Activated CD4-positive, alpha-beta T cell treated with anti-CD3 and anti-CD28 coated beads for 36 hours (primary cell): ENCODE measurements at regions of chr1 and their contacts with region 1.

Region 1: DNA sequence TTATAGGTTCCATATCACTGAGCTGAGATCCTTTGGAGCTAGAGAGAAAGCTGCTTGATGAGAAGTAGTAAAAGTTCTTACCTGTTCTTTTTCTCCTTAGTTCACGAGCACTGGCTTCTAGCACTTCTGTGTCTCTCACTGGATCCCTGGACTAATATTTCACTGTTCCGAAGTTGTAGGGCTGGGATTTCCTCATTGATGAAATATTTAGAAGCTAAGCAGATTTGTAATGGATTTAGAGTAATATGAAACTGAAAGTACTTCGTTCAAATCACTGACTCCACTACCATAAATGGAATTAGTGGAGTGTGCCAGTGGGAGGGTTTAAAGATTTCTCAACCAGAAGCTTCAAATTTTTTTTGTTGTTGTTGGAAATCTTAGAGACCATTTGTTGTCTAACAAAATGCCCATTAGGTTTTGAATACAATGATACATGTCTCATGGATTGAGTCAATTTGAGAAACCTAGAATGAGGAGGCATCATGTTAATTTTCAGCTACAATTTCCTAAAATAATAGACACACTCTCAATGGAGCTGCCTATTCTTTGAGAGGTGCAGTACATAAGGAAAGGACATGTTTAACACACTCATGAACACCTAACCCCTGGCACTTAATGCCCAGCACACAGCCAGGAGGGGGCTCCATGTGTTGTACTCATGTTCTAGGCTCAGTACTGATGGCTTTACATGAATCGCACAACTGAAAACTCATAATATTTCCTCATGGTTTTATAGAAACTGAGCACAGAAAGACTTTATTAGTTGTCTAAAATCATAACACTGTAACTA is at the start of gene GBP1:
- DNase-seq: peak; percentile 24
- ATAC-seq: peak; percentile 77
- H3K4me3 Mint-ChIP-seq: peak within 1 kb of the TSS; percentile 78
- H3K27ac Mint-ChIP-seq: peak within 1 kb of the TSS; percentile 93
- H3K4me1 Mint-ChIP-seq: peaks cover 58% of the 10 kb centered on the region
- H3K27me3 Mint-ChIP-seq: no peaks in the 10 kb centered on the region
- total RNA-seq, gene GBP1: 67.6 to 79.9 TPM

Region 2: DNA sequence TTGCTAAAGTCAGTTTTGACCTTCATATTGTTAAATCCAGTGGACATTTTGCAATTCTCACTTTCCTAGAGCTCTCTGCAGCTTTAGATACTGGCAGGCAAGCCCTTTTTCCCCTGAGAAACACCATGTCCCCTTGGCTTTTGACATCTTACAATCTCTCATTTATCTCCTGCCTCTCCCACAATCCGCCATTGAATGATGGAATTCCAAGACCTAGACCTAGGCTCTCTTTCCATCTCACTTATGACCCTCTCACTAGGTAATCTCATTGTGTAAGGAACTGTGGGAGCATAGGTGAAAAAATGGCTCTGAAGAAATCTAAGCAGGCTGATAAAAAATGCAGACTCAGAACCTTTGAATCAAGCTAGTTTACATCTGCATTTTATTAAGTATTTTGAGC is 74.8 kb before region 1 on chr1:
- CTCF ChIA-PET with region 1: interaction called, 4 read pairs
- POLR2A ChIA-PET with region 1: interaction called, 3 read pairs
- intact Hi-C with region 1: loop called in 1 of 2 experiments (anchors 1 kb)
- DNase-seq: no peak
- ATAC-seq: no peak
- H3K4me3 Mint-ChIP-seq: peak overlapping the region; percentile 41
- H3K27ac Mint-ChIP-seq: peak overlapping the region; percentile 48
- H3K4me1 Mint-ChIP-seq: peaks cover 50% of the 10 kb centered on the region
- H3K27me3 Mint-ChIP-seq: no peaks in the 10 kb centered on the region

Region 3: DNA sequence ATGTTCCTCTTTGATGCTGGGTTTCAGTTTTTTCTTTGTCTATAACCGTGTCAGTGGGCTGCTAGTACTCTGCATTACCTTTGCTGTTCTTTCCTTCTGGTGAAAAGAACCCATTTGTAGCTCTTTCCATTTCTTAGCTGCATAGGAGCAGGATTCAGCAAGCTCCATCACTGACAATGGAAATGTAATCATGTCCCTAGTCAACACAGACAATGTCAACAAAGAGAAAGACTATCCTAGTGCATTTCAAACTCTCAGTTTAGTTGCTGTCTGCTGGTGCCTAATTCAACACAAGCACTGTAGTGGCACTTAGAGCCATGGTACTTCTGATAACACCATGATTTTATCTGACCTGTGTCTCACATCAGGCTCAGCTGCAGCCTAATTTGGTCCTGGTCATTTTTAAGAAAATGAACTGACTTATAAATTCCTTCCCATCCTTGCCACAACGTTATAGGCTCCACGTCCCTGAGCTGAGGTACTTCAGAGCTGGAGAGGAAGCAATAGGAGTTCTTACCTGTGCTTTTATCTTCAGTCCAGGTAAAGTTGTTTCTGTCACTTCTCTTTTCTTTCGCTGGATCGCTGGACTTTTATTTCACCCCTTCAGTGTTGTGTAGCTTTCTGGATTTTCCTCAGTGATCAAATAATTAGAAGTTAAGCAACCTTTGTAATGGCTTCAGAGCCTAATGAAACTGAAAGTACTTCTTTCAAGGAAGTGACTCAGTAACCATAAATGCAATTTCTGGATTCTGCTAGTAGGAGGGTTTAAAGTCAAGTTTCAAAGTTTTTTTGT is 42.9 kb before region 1 on chr1 and contains the start of gene GBP3:
- CTCF ChIA-PET with region 1: interaction called, 6 read pairs
- POLR2A ChIA-PET with region 1: no interaction called
- intact Hi-C with region 1: loop called (anchors 1 to 2 kb)
- DNase-seq: no peak
- ATAC-seq: peak; percentile 82
- H3K4me3 Mint-ChIP-seq: peak within 1 kb of the TSS; percentile 79
- H3K27ac Mint-ChIP-seq: peak within 1 kb of the TSS; percentile 93
- H3K4me1 Mint-ChIP-seq: peaks cover 54% of the 10 kb centered on the region
- H3K27me3 Mint-ChIP-seq: no peaks in the 10 kb centered on the region
- total RNA-seq, gene GBP3: 4.8 to 5.8 TPM

Region 4: GRCh38 chr1:89104147-89104546 is 38.9 kb after region 1 on chr1:
- CTCF ChIA-PET with region 1: interaction called, 3 read pairs
- POLR2A ChIA-PET with region 1: no interaction called
- intact Hi-C with region 1: loop called in 1 of 2 experiments (anchors 1 kb)
- DNase-seq: no peak
- ATAC-seq: peak; percentile 80
- H3K4me3 Mint-ChIP-seq: no peak overlapping the region
- H3K27ac Mint-ChIP-seq: peak overlapping the region; percentile 74
- H3K4me1 Mint-ChIP-seq: peaks cover 46% of the 10 kb centered on the region
- H3K27me3 Mint-ChIP-seq: no peaks in the 10 kb centered on the region

Region 5: GRCh38 chr1:89771991-89772560 is 706.8 kb after region 1 on chr1:
- CTCF ChIA-PET with region 1: no interaction called
- POLR2A ChIA-PET with region 1: no interaction called
- intact Hi-C with region 1: no loop called
- DNase-seq: no peak
- ATAC-seq: no peak
- H3K4me3 Mint-ChIP-seq: no peak overlapping the region
- H3K27ac Mint-ChIP-seq: no peak overlapping the region
- H3K4me1 Mint-ChIP-seq: peaks cover 8% of the 10 kb centered on the region
- H3K27me3 Mint-ChIP-seq: no peaks in the 10 kb centered on the region